Left cardiac atrium (tissue), 4 donors: ENCODE measurements at regions of chr15 and their contacts with region 1.

Region 1: GRCh38 chr15:98442379-98442833 is 205.9 kb upstream of the IGF1R start:
- DNase-seq: no peak
- ATAC-seq: peak; percentile 68 to 73

Region 2: GRCh38 chr15:99076552-99077308 is 634.3 kb after region 1 on chr15:
- intact Hi-C with region 1: loop called (anchors 2 to 10 kb)
- DNase-seq: peak; percentile 69
- ATAC-seq: peak; percentile 78 to 92

Region 3: DNA sequence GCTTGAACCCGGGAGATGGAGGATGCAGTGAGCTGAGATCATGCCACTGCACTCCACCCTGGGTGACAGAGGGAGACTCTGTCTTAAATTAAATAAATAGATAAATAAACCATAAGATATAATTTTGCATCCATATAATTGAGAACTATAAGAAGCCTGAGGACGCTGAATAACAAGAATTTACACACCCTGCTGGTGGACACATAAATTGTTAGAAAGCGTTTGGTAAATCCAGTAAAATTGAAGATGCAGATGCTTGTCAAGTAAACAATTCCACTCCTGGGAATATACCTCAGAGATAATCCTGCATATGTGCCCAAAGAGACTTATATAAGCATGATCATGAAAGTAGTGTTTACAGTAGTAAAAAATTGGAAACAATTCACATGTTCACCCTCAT is 765.3 kb after region 1 on chr15:
- intact Hi-C with region 1: loop called in 1 of 2 experiments (anchors 10 kb)
- DNase-seq: no peak
- ATAC-seq: no peak